ENCODE measurements at regions of chr22 and their contacts with region 1.

Region 1: GRCh38 chr22:38872172-38872830 is at the start of gene CBX6:
- DNase-seq: peak; percentile 94
- H3K4me3 Mint-ChIP-seq: peak within 1 kb of the TSS; percentile 96
- H3K27ac Mint-ChIP-seq: peak within 1 kb of the TSS; percentile 94
- H3K4me1 Mint-ChIP-seq: peaks cover 63% of the 10 kb centered on the region
- H3K27me3 Mint-ChIP-seq: no peaks in the 10 kb centered on the region
- total RNA-seq, gene CBX6: 91.4 to 93.5 TPM

Region 2: DNA sequence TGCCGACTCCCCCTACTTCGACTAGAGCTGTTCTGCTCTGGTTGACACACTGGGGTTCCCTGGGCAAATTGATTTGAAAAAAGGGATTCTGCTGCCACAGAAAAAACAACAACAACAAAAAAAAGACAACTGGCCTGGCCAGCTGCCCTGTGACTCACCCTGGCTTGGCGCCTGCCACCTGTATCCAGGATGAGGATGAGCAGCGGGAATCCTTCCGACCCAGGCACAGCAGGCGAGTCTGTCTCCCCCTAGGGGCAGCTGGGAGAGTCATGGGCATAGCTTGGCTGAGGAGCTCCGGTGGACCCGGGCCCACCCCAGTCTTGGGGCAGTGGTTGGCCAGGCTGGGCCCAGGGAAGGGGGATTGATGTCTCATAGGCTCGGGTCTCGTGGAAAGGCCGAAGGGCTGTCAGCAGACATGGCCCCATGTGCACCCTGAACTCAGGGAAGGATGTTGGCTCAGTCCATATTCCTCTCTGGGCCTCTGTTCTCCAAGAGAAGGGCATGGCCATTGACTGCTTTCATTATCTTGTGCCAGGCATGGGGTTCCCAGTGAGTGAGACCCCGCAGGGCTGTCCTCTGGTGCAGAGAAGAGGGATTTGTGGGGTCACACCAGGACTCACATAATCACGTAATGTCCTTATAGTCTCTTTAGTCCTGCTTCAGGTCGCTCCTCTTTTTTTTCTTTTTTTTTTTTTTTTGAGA is 106.1 kb before region 1 on chr22:
- CTCF ChIA-PET with region 1: interaction called, 27 read pairs
- intact Hi-C with region 1: no loop called
- DNase-seq: peak; percentile 58
- H3K4me3 Mint-ChIP-seq: no peak overlapping the region
- H3K27ac Mint-ChIP-seq: no peak overlapping the region
- H3K4me1 Mint-ChIP-seq: peaks cover 5% of the 10 kb centered on the region
- H3K27me3 Mint-ChIP-seq: no peaks in the 10 kb centered on the region

Region 3: DNA sequence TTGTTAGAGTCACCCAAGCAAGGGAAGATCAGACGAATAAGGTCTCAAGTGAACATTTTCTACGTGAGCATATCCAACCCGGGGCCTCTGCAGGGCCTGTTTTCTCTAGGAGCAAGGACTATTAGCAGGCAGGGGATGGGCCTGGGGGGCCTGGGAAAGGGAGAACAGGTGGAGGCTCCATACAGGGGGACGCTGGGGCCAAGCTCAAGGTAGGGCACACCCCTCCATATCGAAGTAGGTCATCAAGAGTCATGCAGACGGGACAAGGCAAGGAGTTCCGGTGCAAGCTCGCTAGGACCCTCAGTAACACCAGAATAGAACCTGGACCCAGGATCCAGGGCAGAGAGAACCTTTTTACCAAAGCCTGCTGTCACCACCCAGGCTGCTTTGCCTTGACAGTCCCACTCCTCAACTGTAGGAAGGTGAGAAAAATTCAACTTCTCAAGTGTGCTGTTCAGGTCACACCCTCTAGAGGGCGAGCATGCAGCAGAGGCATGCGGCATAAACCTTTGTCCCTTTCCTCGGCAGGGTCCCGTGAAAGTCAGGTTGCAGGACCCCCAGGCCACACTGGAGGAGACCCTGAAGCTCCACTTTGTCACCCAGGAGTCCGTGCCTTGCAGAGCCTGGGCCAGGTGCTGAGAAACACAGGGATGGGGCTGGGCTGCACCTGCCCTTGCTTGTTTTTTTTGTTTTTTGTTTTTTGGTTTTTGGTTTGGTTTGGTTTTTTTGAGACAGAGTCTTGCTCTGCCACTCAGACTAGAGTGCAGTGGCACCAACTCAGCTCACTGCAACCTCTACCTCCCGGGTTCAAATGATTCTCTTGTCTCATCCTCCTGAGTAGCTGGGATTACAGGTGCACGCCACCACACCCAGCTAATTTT is 101.2 kb after region 1 on chr22:
- CTCF ChIA-PET with region 1: interaction called, 16 read pairs
- intact Hi-C with region 1: no loop called
- DNase-seq: peak; percentile 77
- H3K4me3 Mint-ChIP-seq: no peak overlapping the region
- H3K27ac Mint-ChIP-seq: no peak overlapping the region
- H3K4me1 Mint-ChIP-seq: peaks cover 4% of the 10 kb centered on the region
- H3K27me3 Mint-ChIP-seq: peaks cover 2% of the 10 kb centered on the region

Region 4: GRCh38 chr22:39090426-39091064 is 218.2 kb after region 1 on chr22:
- CTCF ChIA-PET with region 1: interaction called, 3 read pairs
- intact Hi-C with region 1: loop called (anchors 2 kb)
- DNase-seq: peak; percentile 94
- H3K4me3 Mint-ChIP-seq: peak overlapping the region; percentile 54
- H3K27ac Mint-ChIP-seq: peak overlapping the region; percentile 91
- H3K4me1 Mint-ChIP-seq: peaks cover 72% of the 10 kb centered on the region
- H3K27me3 Mint-ChIP-seq: no peaks in the 10 kb centered on the region

Region 5: GRCh38 chr22:39152511-39153219 is 280.4 kb after region 1 on chr22 and contains the start of gene CBX7:
- CTCF ChIA-PET with region 1: no interaction called
- intact Hi-C with region 1: loop called (anchors 2 kb)
- DNase-seq: peak; percentile 94
- H3K4me3 Mint-ChIP-seq: peak within 1 kb of the TSS; percentile 84
- H3K27ac Mint-ChIP-seq: peak within 1 kb of the TSS; percentile 60
- H3K4me1 Mint-ChIP-seq: peaks cover 36% of the 10 kb centered on the region
- H3K27me3 Mint-ChIP-seq: peaks cover 15% of the 10 kb centered on the region
- total RNA-seq, gene CBX7: 20.8 to 24.1 TPM

Region 6: DNA sequence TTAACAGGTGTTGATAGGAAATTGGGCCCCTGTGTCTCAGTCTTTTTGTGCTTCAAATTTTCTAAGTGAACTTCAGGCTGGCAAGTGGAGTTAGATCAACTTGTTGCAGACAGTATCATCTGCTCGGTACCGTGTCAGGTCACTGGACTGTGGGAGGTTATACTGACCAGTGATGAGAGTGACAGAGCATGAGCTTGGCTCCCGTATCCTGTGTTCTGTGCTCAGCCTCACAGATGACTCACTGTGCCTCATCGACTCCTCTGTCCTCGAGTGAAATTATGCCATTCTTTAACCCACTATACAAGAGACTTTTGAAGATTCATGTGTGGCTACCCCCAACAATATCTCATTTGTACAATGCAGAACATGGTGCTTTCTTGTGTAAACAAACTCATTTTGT is 1036.4 kb after region 1 on chr22:
- CTCF ChIA-PET with region 1: no interaction called
- intact Hi-C with region 1: loop called (anchors 5 kb)
- DNase-seq: peak; percentile 65
- H3K4me3 Mint-ChIP-seq: peak overlapping the region; percentile 90
- H3K27ac Mint-ChIP-seq: peak overlapping the region; percentile 100
- H3K4me1 Mint-ChIP-seq: peaks cover 57% of the 10 kb centered on the region
- H3K27me3 Mint-ChIP-seq: no peaks in the 10 kb centered on the region